Activated T-helper 1 cell treated with anti-CD3 and anti-CD28 coated beads, Interleukin-12 subunit alpha, Interleukin-12 subunit beta, Interleukin-2, Interleukin-4 antibody, amounts not matched to agents 30 ng/mL and 10 ng/mL and 1 ng/mL, durations not matched to agents 14 hours and 24 hours and 36 hours (primary cell): ENCODE measurements at regions of chr6 and their contacts with region 1.

Region 1: GRCh38 chr6:125798734-125799508 is 8.2 kb downstream of the NCOA7 start:
- DNase-seq: no peak
- H3K4me3 Mint-ChIP-seq: no peak overlapping the region
- H3K27ac Mint-ChIP-seq: no peak overlapping the region
- H3K4me1 Mint-ChIP-seq: peaks cover 57% of the 10 kb centered on the region
- H3K27me3 Mint-ChIP-seq: no peaks in the 10 kb centered on the region

Region 2: GRCh38 chr6:125814481-125814880 is 15.6 kb after region 1 on chr6:
- intact Hi-C with region 1: loop called (anchors 2 kb)
- DNase-seq: no peak
- H3K4me3 Mint-ChIP-seq: no peak overlapping the region
- H3K27ac Mint-ChIP-seq: peak overlapping the region; percentile 47
- H3K4me1 Mint-ChIP-seq: peaks cover 67% of the 10 kb centered on the region
- H3K27me3 Mint-ChIP-seq: no peaks in the 10 kb centered on the region